ENCODE measurements at regions of chr16 and their contacts with region 1.

Region 1: GRCh38 chr16:89917773-89918452 is 749 bp upstream of the MC1R start:
- DNase-seq: peak; percentile 89
- CTCF ChIP-seq: no peak

Region 2: DNA sequence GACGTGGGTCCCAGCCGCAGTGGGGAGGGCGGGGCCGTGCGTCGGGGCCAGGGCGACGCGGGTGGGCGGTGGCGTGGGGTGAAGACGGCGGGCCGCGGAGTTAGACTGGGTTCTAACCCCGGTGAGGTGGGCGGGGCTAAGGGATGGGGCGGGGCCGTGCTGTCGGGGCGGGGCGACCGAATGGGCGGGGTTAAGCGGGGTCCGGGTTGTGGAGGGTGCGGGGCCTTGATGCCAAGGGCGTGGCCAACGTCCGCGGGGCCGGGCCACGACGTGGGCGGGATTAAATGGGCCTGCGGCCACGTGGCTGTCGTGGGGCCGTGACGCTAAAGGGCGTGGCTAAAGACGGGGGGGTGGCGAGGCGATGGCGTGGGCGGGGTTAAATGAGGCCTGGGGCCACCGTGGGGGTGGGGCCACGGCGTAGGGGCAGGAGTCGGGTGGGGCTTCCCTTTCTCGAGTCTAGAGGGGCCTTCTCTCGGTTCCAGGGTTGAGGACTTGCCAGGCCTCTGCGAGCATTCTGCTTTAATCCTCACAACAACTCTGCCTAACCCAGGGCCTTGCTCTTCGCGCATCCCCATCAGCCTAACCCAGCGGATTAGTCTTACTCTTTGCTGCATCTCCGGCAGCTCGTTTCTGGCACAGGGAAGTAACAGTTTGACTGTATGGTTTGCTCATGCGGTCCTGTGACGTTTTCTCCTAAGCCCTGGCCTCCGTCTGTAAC is 43.8 kb before region 1 on chr16:
- CTCF ChIA-PET with region 1: no interaction called
- POLR2A ChIA-PET with region 1: interaction called, 10 read pairs
- DNase-seq: peak; percentile 98
- CTCF ChIP-seq: no peak